Activated CD4-positive, alpha-beta T cell treated with anti-CD3 and anti-CD28 coated beads, Interleukin-2, amount 10 ng/mL, durations not matched to agents 24 days and 14 days (primary cell): ENCODE measurements at regions of chr2 and their contacts with region 1.

Region 1: GRCh38 chr2:47782671-47783485 is at the start of gene MSH6:
- DNase-seq: peak; percentile 97
- H3K4me3 Mint-ChIP-seq: peak within 1 kb of the TSS; percentile 90
- H3K27ac Mint-ChIP-seq: peak within 1 kb of the TSS; percentile 89
- H3K4me1 Mint-ChIP-seq: peaks cover 14% of the 10 kb centered on the region
- H3K27me3 Mint-ChIP-seq: no peaks in the 10 kb centered on the region
- total RNA-seq, gene MSH6: 148 and 153 TPM in 2 replicates

Region 2: DNA sequence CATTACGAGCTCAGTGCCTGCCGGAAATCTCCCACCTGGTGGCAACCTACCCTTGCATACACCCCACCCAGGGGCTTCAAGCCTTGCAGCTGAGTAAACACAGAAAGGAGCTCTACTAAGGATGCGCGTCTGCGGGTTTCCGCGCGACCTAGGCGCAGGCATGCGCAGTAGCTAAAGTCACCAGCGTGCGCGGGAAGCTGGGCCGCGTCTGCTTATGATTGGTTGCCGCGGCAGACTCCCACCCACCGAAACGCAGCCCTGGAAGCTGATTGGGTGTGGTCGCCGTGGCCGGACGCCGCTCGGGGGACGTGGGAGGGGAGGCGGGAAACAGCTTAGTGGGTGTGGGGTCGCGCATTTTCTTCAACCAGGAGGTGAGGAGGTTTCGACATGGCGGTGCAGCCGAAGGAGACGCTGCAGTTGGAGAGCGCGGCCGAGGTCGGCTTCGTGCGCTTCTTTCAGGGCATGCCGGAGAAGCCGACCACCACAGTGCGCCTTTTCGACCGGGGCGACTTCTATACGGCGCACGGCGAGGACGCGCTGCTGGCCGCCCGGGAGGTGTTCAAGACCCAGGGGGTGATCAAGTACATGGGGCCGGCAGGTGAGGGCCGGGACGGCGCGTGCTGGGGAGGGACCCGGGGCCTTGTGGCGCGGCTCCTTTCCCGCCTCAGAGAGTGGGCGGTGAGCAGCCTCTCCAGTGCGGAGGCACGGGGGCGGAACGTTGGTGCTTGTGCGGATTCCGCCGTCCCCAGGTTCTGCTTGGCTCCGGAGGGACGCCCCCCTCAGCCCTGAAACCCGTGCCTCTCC is 379.9 kb before region 1 on chr2 and contains the start of gene MSH2:
- intact Hi-C with region 1: loop called (anchors 2 kb)
- DNase-seq: peak; percentile 98
- H3K4me3 Mint-ChIP-seq: peak within 1 kb of the TSS; percentile 97
- H3K27ac Mint-ChIP-seq: peak within 1 kb of the TSS; percentile 96
- H3K4me1 Mint-ChIP-seq: peaks cover 31% of the 10 kb centered on the region
- H3K27me3 Mint-ChIP-seq: no peaks in the 10 kb centered on the region
- total RNA-seq, gene MSH2: 79.7 and 79.8 TPM in 2 replicates

Region 3: DNA sequence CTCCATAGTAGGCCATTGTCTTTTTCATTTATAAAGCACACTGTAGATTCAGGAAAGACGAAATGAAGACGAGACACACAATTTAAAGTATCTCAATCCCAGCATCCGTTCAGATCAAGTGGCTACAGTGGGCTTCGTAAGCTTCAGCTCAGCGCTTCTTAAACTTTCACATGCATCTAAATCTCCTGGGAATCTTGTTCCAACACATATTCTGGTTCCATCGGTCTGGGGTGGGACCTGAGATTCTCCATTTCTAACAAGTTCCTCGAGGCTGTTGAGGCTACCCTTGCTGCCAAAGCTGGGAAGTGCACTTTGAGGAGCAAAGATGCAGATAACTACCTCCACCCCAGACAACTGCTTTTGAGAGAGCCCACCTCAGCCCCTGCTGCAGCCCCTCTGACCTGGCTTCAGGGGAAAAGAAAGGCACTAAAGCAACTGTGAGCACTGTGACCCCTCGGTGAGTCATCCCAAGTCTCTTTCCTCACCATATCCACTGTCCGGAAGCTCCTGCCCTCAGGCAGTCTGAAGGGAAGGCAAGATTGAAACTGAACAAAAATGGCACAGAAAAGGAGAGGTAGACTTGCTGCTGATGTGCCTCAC is 324.5 kb after region 1 on chr2:
- intact Hi-C with region 1: loop called (anchors 5 kb)
- DNase-seq: no peak
- H3K4me3 Mint-ChIP-seq: no peak overlapping the region
- H3K27ac Mint-ChIP-seq: no peak overlapping the region
- H3K4me1 Mint-ChIP-seq: peaks cover 19% of the 10 kb centered on the region
- H3K27me3 Mint-ChIP-seq: peaks cover 12% of the 10 kb centered on the region

Region 4: GRCh38 chr2:48238381-48238780 is 455.5 kb after region 1 on chr2:
- intact Hi-C with region 1: no loop called
- DNase-seq: no peak
- H3K4me3 Mint-ChIP-seq: no peak overlapping the region
- H3K27ac Mint-ChIP-seq: no peak overlapping the region
- H3K4me1 Mint-ChIP-seq: peaks cover 10% of the 10 kb centered on the region
- H3K27me3 Mint-ChIP-seq: no peaks in the 10 kb centered on the region